Activated T-helper 1 cell treated with anti-CD3 and anti-CD28 coated beads, Interleukin-12 subunit alpha, Interleukin-12 subunit beta, Interleukin-2, Interleukin-4 antibody, amounts not matched to agents 30 ng/mL and 10 ng/mL and 1 ng/mL, durations not matched to agents 14 hours and 24 hours and 36 hours (primary cell): ENCODE measurements at regions of chr2 and their contacts with region 1.

Region 1: GRCh38 chr2:200713003-200713703 is 98.6 kb upstream of the BZW1 start:
- DNase-seq: peak; percentile 89
- H3K4me3 Mint-ChIP-seq: peak overlapping the region; percentile 79
- H3K27ac Mint-ChIP-seq: peak overlapping the region; percentile 99
- H3K4me1 Mint-ChIP-seq: peaks cover 44% of the 10 kb centered on the region
- H3K27me3 Mint-ChIP-seq: no peaks in the 10 kb centered on the region

Region 2: GRCh38 chr2:200306196-200306930 is 406.8 kb before region 1 on chr2 and contains the start of gene SPATS2L:
- intact Hi-C with region 1: loop called (anchors 5 kb)
- DNase-seq: peak; percentile 44
- H3K4me3 Mint-ChIP-seq: peak within 1 kb of the TSS; percentile 90
- H3K27ac Mint-ChIP-seq: peak within 1 kb of the TSS; percentile 85
- H3K4me1 Mint-ChIP-seq: peaks cover 35% of the 10 kb centered on the region
- H3K27me3 Mint-ChIP-seq: peaks cover 10% of the 10 kb centered on the region
- total RNA-seq, gene SPATS2L: 35.1 and 38.0 TPM in 2 replicates

Region 3: DNA sequence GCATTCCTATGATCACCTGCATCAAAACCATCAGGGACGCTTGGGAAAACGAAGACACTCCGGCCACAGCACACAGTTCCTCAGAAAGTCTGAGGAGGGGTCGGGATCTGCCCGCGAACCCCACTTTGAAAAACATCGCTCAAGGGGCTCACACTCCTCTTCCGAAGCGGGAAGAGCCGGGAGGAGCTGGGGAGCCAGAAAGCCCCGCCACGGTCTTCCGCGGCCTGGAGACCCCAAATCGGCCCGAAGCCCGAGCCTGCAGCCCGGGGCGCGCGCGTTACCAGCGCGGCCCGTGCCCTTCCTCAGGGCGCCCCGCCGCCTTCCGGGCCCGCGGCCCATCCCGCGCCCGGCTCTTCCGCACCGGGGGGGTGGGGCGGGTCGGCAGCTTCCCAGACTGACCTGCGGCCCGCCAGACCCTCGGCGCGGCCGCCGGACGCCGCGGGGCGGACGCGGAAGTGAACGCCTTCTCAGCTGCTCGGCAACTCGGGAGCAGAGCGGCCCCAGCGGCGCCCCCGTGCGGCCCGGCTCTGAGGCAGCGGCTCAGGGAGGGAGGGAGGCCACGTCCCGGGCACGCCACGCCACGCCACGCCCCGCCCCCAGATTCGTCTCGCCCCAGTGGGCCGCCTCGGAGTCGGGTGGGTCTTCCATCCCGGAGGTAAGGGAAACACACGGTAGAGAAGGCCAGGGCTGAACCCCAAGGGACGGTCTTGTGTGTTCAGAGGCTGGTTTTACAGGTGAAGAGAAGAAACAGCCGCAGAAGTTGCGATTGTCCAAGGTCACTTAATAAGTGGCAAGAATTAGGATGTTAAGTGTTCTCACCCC is 203.3 kb before region 1 on chr2 and contains the start of gene KCTD18:
- intact Hi-C with region 1: loop called (anchors 1 kb)
- DNase-seq: peak; percentile 90
- H3K4me3 Mint-ChIP-seq: peak within 1 kb of the TSS; percentile 96
- H3K27ac Mint-ChIP-seq: peak within 1 kb of the TSS; percentile 90
- H3K4me1 Mint-ChIP-seq: peaks cover 21% of the 10 kb centered on the region
- H3K27me3 Mint-ChIP-seq: no peaks in the 10 kb centered on the region
- total RNA-seq, gene KCTD18: 14.5 and 15.8 TPM in 2 replicates

Region 4: GRCh38 chr2:200765139-200765951 is 52.2 kb after region 1 on chr2:
- intact Hi-C with region 1: loop called (anchors 1 kb)
- DNase-seq: no peak
- H3K4me3 Mint-ChIP-seq: no peak overlapping the region
- H3K27ac Mint-ChIP-seq: peak overlapping the region; percentile 82
- H3K4me1 Mint-ChIP-seq: peaks cover 29% of the 10 kb centered on the region
- H3K27me3 Mint-ChIP-seq: no peaks in the 10 kb centered on the region

Region 5: DNA sequence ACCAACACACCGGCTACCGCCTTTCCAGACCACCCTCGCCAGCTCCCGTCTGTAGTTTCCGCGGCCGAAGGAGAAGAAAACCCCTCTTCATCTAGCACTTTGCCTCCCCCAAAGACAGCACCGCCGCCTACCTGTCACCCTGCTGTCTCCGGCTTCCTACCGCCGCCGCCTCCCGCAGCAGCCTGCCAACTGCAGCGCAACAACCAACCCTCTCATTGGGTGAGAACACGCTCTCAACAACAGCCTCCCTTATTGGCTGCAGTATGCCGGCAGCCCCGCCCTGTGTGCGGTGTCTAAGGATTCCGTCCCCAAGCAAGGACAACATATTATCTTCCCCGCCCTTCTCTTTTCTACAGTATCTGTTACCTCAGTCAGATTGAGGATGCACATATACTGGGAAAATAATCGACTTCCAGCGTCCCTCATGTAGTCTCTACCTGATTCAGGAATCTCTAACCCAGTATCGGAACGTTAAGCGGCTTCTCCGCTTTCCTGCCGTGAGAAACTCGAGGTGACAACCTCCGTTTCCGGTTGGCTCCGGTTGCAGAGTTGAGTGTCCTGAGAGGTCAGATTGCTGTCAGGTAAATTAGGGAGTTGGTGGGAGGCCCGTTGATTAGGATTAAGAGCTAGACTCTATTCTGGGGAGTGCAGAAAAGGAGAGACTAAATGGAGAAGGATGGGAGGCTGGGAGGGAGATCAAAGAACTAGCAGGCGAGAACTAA is 358.5 kb after region 1 on chr2 and contains the starts of genes HYCC2 and NDUFB3:
- intact Hi-C with region 1: loop called (anchors 2 kb)
- DNase-seq: peak; percentile 90
- H3K4me3 Mint-ChIP-seq: peak within 1 kb of the TSS; percentile 90
- H3K27ac Mint-ChIP-seq: peak within 1 kb of the TSS; percentile 95
- H3K4me1 Mint-ChIP-seq: peaks cover 49% of the 10 kb centered on the region
- H3K27me3 Mint-ChIP-seq: no peaks in the 10 kb centered on the region
- total RNA-seq, gene HYCC2: 26.1 and 29.4 TPM in 2 replicates
- total RNA-seq, gene NDUFB3: 105 and 121 TPM in 2 replicates

Region 6: DNA sequence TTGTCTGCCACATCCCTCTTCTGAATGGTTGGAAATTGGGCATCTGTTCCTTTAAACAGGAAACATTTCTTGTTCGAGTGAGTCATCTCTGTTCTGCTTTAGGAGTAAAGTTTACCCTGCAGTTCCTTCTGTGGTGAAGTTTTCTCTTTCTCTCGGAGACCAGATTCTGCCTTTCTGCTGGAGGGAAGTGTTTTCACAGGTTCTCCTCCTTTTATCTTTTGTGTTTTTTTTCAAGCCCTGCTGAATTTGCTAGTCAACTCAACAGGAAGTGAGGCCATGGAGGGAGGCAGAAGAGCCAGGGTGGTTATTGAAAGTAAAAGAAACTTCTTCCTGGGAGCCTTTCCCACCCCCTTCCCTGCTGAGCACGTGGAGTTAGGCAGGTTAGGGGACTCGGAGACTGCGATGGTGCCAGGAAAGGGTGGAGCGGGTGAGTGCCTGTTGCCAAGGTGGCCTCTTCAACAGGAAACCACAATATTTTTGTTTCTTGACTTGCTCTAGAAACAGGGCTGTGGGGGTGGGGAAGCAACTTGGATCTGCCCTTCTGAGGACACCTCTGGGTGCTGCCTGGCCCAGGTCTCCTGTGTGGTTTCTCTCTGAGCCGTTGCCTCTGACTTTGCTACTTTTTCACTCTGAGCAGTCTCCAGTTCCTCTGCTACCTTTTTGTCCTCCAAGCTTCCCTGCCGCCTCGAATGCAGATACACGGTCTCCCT is 545.0 kb after region 1 on chr2:
- intact Hi-C with region 1: loop called (anchors 1 kb)
- DNase-seq: peak; percentile 93
- H3K4me3 Mint-ChIP-seq: peak overlapping the region; percentile 91
- H3K27ac Mint-ChIP-seq: peak overlapping the region; percentile 100
- H3K4me1 Mint-ChIP-seq: peaks cover 84% of the 10 kb centered on the region
- H3K27me3 Mint-ChIP-seq: no peaks in the 10 kb centered on the region